Esophagus muscularis mucosa (tissue), 4 donors: ENCODE measurements at regions of chr20 and their contacts with region 1.

Region 1: DNA sequence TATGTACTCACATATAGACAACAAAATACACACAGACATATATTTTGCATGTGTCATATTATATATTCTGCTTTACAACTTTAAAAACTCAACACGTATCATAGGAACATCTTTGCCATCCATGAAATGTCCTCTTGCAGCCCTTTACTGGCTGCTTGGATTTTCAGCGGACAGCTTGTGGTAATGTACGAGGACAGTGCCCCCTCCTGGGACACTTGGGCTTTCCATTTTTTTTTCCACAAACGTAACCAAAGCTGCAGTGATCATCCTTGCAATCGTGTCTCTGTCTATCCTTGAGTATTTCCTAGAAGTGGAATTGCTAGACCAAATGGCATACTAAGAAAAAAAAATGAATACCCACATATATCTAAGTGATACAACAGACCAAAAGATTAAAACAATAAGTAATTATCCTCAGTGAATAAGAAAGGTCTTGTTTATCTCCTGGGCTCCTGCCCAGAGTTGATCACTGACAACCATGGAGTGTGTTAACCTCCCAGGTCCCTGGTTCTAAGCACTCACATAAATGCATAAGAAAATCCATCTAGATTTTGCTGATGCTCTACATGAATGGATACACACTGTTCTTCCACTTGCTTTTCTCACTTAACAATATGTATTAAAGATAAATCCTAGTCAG is 18.1 kb downstream of the BPI start:
- DNase-seq: no peak
- H3K4me3 ChIP-seq: no peak overlapping the region
- H3K27ac ChIP-seq: no peak overlapping the region
- H3K4me1 ChIP-seq: peaks cover 0 to 5% (median 0%) of the 10 kb centered on the region in 4 donors
- H3K27me3 ChIP-seq: peaks cover 0 to 14% (median 0%) of the 10 kb centered on the region in 4 donors
- CTCF ChIP-seq: peak; percentile 48 to 58 (median 49)
- EP300 ChIP-seq: no peak
- POLR2A ChIP-seq: no peak

Region 2: DNA sequence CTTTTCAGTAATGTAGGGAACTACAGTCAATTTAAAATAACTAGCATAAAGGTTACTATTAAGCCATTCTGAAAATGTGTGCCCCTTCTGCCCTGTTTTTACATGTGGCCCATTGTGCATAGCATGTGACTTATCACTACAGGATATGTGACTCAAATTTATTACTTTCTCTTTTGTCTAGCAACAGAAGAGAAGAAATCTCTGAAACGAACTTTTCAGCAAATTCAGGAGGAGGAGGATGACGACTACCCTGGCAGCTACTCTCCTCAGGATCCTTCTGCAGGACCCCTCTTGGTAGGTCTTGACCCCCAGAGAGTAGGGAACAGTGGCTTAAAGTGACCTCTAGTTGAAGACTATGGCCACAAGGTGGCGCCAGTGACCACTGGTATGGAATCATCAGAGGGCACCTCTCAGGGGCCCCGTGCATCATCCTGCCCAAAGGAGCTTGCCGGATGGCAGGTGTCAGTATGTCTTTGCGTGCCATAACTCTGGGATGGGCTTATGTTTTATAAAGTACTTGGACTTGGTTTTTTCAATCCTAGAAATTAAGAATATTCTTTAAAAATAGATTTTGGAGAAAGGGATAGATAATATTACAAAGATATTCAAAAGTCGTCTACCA is 264.6 kb before region 1 on chr20:
- intact Hi-C with region 1: loop called (anchors 5 kb)
- DNase-seq: peak; percentile 95
- H3K4me3 ChIP-seq: no peak overlapping the region
- H3K27ac ChIP-seq: peak overlapping the region in 1 of 4 donors; percentile 6
- H3K4me1 ChIP-seq: peaks cover 0 to 16% (median 8%) of the 10 kb centered on the region in 4 donors
- H3K27me3 ChIP-seq: no peaks in the 10 kb centered on the region
- CTCF ChIP-seq: peak; percentile 83 to 87 (median 85)
- EP300 ChIP-seq: no peak
- POLR2A ChIP-seq: no peak

Region 3: DNA sequence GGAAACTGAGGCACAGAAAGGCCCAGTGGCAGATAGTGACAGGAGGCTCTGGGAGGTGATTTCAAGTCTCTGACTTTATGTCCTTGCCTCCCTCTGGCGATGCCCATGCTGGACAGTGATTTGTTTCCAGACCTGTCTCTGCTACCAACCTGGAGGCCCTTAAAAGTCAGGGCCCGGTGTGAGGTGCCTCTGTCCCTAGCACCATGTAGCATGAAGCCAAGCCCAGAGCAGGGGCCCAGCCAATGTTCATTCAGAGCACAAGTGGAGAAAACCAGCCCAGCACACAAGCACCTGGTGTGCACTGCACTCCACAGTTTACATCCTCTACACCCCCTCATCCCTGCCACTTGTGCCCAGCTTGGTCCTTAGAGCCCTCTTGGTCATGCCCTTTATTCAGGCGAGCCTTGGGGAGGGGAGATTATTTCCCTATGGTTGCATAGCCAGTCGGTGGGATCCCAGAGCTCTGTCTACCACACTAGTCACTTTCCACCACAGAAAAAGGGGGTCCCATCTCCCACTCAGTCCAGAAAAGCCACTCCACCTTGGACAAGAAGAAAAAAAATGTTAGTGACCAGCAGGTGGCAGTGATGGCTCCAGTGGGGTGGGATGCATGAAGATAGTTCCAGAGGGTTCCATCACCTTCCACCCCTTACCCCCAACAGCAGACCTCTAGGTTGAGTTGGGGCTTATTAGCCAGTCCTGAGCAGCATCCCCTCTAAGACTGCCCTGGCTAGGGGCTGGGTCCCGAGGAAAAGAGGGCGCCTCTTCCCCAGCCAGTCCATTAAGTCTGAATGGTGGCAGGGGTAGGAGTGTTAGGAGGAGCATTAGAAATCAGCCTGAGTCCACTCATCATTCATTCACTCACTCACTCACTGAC is 92.5 kb before region 1 on chr20:
- intact Hi-C with region 1: loop called (anchors 5 kb)
- DNase-seq: no peak
- H3K4me3 ChIP-seq: no peak overlapping the region
- H3K27ac ChIP-seq: no peak overlapping the region
- H3K4me1 ChIP-seq: peaks cover 0 to 15% (median 9%) of the 10 kb centered on the region in 4 donors
- H3K27me3 ChIP-seq: no peaks in the 10 kb centered on the region
- CTCF ChIP-seq: peak in 2 of 3 experiments; percentile 28 to 41
- EP300 ChIP-seq: no peak
- POLR2A ChIP-seq: no peak